Activated T-helper 1 cell treated with anti-CD3 and anti-CD28 coated beads, Interleukin-12 subunit alpha, Interleukin-12 subunit beta, Interleukin-2, Interleukin-4 antibody, amounts not matched to agents 30 ng/mL and 10 ng/mL and 1 ng/mL, durations not matched to agents 14 hours and 24 hours and 36 hours (primary cell): ENCODE measurements at regions of chr3 and their contacts with region 1.

Region 1: DNA sequence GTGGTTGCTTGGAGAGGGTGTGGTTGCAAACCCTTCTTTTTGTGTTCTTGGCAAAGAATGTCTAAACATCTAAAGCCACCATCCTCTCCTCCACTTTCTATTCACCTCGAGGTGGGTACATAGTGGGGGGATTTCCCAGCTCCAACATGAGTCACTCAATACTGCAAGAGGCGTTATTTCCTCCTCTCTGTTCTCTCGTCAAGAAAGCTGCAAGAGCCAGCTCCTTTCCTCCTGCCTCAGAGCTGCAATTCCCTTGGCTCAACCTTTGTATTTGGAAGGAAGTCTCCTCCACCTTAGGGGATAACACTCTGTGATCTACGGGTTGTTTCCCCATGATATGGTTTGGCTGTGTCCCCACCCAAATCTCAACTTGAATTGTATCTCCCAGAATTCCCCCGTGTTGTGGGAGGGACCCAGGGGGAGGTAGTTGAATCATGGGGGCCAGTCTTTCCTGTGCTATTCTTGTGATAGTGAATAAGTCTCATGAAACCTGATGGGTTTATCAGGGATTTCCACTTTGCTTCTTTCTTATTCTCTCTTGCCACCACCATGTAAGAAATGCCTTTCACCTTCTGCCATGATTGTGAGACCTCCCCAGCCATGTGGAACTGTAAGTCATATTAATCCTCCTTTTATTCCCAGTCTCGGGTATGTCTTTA is 138.4 kb downstream of the PLCL2 start:
- DNase-seq: peak; percentile 61
- H3K4me3 Mint-ChIP-seq: peak overlapping the region; percentile 47
- H3K27ac Mint-ChIP-seq: peak overlapping the region; percentile 75
- H3K4me1 Mint-ChIP-seq: peaks cover 58% of the 10 kb centered on the region
- H3K27me3 Mint-ChIP-seq: no peaks in the 10 kb centered on the region

Region 2: GRCh38 chr3:16842272-16843270 is 180.6 kb before region 1 on chr3:
- intact Hi-C with region 1: loop called (anchors 2 kb)
- DNase-seq: peak; percentile 73
- H3K4me3 Mint-ChIP-seq: peak overlapping the region; percentile 77
- H3K27ac Mint-ChIP-seq: peak overlapping the region; percentile 99
- H3K4me1 Mint-ChIP-seq: peaks cover 71% of the 10 kb centered on the region
- H3K27me3 Mint-ChIP-seq: peaks cover 3% of the 10 kb centered on the region

Region 3: DNA sequence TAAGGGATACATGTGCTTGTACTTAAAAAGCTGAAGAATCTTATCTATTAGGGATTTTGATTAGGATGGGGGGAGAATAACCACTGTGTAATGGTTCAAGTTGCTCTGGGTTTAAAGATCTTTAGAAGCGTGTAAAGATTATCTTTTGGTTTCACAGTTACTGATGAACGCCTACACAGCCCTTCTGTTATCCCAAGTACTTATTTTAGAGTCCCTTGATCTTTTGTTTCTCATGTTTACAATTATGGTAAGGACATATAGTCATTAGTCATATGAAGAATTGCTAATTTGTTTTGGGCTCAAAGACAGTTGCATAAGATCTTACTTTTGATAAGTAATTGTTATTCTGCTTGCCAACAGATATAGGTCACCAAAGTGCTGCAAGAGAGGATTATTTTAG is 21.7 kb after region 1 on chr3:
- intact Hi-C with region 1: loop called (anchors 1 kb)
- DNase-seq: no peak
- H3K4me3 Mint-ChIP-seq: no peak overlapping the region
- H3K27ac Mint-ChIP-seq: peak overlapping the region; percentile 40
- H3K4me1 Mint-ChIP-seq: peaks cover 57% of the 10 kb centered on the region
- H3K27me3 Mint-ChIP-seq: no peaks in the 10 kb centered on the region

Region 4: DNA sequence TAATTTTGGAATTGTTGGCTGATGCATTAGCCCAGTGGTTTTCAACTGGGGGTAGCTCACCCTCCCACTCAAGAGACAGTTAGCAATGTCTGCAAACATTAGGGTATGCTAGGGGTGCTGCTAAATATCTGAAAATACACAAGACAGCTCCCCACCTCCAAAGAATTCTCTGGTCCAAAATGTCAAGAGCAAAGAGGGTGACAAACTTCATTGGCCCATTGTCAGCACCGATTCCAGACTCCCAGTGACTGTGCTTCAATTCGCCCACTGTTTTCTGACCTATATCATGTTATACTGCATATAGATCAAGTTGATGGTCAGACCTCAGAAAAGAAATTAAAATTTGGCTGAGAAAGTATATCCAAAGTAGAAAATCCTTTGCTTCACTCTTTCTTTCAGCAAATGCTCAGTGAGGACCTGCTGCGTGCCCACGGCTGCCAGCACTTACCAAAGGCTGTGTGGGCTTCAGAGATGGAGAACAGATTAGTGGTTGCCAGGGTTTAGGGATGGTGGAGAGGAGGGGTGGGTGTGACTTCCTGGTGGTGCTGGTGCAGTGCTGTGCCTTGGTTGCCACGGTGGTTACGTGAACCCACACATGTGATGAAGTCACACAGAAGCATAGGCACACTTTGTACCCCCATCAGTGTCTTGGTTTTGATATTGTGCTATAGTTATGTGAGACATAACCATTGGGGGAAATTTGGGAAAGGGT is 65.6 kb after region 1 on chr3:
- intact Hi-C with region 1: loop called (anchors 5 kb)
- DNase-seq: no peak
- H3K4me3 Mint-ChIP-seq: peak overlapping the region; percentile 27
- H3K27ac Mint-ChIP-seq: peak overlapping the region; percentile 25
- H3K4me1 Mint-ChIP-seq: peaks cover 39% of the 10 kb centered on the region
- H3K27me3 Mint-ChIP-seq: no peaks in the 10 kb centered on the region

Region 5: GRCh38 chr3:17233398-17233800 is 210.3 kb after region 1 on chr3:
- intact Hi-C with region 1: loop called (anchors 1 kb)
- DNase-seq: peak; percentile 27
- H3K4me3 Mint-ChIP-seq: no peak overlapping the region
- H3K27ac Mint-ChIP-seq: no peak overlapping the region
- H3K4me1 Mint-ChIP-seq: peaks cover 13% of the 10 kb centered on the region
- H3K27me3 Mint-ChIP-seq: no peaks in the 10 kb centered on the region